ENCODE measurements at regions of chr12 and their contacts with region 1.

Region 1: GRCh38 chr12:23204933-23205778 is 580.2 kb downstream of the ETNK1 start:
- DNase-seq: peak in 1 of 5 donors; percentile 13
- ATAC-seq: peak in 2 of 4 donors; percentile 57 to 65
- H3K4me3 ChIP-seq: no peak overlapping the region
- H3K27ac ChIP-seq: no peak overlapping the region
- H3K4me1 ChIP-seq: no peaks in the 10 kb centered on the region
- H3K27me3 ChIP-seq: no peaks in the 10 kb centered on the region
- CTCF ChIP-seq: peak; percentile 74 to 96 (median 90)
- POLR2A ChIP-seq: no peak

Region 2: DNA sequence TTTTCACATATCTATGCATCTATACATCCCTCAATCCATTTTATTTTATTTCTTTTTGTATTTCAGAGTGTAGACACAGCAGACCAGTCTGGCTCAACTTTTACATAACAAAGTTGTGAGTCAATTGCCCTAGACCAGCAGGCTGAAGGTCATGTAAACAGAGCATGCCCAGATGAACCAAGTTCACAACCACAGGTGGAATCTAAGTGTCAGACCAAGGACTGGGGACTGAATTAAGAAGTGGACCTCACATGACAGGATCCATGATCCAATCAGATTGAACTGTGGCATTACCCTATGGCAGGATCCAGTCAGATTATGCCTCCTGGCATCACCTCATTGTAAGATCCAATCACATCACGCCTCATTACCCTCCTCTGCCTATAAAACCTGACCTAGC is 288.5 kb after region 1 on chr12:
- intact Hi-C with region 1: no loop called
- DNase-seq: no peak
- ATAC-seq: no peak
- H3K4me3 ChIP-seq: no peak overlapping the region
- H3K27ac ChIP-seq: no peak overlapping the region
- H3K4me1 ChIP-seq: no peaks in the 10 kb centered on the region
- H3K27me3 ChIP-seq: no peaks in the 10 kb centered on the region
- CTCF ChIP-seq: no peak
- POLR2A ChIP-seq: no peak

Region 3: DNA sequence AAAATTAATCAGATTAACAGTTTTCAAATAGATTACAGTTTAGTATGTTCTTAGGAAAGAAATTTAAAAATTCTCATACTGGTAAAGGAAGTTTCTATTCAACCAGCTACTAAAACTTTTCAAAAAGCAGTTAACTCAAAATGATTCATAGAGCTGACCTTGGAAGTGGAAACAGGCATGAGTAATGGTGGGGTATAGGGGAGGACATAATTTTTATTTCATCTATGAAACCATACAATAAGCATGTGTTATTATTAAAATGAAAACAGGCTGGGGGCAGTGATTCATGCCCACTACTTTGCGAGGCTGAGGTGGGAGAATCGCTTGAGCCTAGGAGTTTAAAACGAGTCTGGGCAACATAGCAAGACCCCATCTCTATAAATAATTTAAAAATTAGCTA is 1916.8 kb after region 1 on chr12:
- intact Hi-C with region 1: loop called in 1 of 10 experiments (anchors 10 kb)
- DNase-seq: no peak
- ATAC-seq: no peak
- H3K4me3 ChIP-seq: no peak overlapping the region
- H3K27ac ChIP-seq: no peak overlapping the region
- H3K4me1 ChIP-seq: no peaks in the 10 kb centered on the region
- H3K27me3 ChIP-seq: no peaks in the 10 kb centered on the region
- CTCF ChIP-seq: no peak
- POLR2A ChIP-seq: no peak